GM13977 (cell line): ENCODE measurements at regions of chr6 and their contacts with region 1.

Region 1: GRCh38 chr6:3247255-3248146 is 11.2 kb upstream of the PSMG4 start:
- DNase-seq: no peak
- CTCF ChIP-seq: no peak

Region 2: GRCh38 chr6:2765166-2765895 is 482.2 kb before region 1 on chr6 and contains the start of gene WRNIP1:
- in situ Hi-C with region 1: no loop called
- DNase-seq: peak; percentile 98
- CTCF ChIP-seq: peak; percentile 77

Region 3: GRCh38 chr6:2999618-3000557 is 247.6 kb before region 1 on chr6 and contains the start of gene NQO2:
- in situ Hi-C with region 1: no loop called
- DNase-seq: peak; percentile 99
- CTCF ChIP-seq: no peak

Region 4: GRCh38 chr6:3124667-3125066 is 122.8 kb before region 1 on chr6:
- in situ Hi-C with region 1: loop called (anchors 10 kb)
- DNase-seq: no peak
- CTCF ChIP-seq: no peak

Region 5: DNA sequence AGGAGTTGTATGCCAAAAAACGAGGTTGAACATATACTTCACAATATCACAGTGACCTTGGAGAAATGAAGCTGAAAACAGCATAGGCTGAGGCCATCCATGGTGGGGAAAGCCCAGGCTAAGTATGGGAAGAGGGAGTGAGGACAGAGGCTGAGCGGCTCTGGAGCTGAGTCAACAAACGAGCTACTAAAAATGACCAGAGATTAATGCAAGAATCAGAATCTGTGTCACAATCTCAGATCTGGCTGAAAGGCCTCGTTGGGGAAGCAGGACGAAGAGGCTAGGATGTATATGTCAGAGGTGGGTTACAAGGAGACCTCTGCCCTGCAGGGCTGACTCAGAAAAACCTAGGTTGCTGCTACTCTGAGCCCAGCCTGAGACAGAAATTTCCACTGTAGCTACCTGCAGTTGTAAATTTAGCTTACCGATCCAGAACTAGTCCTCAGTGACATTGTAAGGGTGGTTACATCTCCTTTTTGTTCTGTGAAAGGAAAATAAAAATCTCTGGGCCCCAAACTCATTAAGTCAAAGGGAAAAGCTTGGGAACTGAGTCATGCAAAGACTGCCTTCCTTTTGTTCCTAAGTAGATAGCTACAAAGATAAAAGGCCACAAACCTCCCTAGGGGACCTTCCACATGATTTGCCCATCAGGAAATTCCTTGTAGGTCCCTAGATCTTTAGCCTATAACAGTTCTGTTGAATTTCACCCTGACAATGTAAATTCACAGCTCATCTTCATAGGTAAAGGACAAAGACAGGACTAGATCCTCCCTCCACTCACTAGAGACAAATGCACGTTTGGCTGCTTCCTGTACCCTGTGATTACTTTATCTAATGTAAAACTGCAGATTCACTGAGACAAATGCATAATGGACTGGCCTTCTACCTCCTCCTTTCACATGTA is 81.6 kb before region 1 on chr6:
- in situ Hi-C with region 1: no loop called
- DNase-seq: no peak
- CTCF ChIP-seq: no peak